ENCODE measurements at regions of chr4 and their contacts with region 1.

Region 1: GRCh38 chr4:1082215-1083182 is 30.9 kb downstream of the RNF212 start:
- DNase-seq: peak; percentile 76 to 91
- H3K4me3 ChIP-seq: peak overlapping the region in 1 of 2 donors; percentile 27
- H3K27ac ChIP-seq: no peak overlapping the region
- H3K4me1 ChIP-seq: peaks cover 7 to 8% of the 10 kb centered on the region in 2 donors
- H3K27me3 ChIP-seq: no peaks in the 10 kb centered on the region
- CTCF ChIP-seq: no peak

Region 2: DNA sequence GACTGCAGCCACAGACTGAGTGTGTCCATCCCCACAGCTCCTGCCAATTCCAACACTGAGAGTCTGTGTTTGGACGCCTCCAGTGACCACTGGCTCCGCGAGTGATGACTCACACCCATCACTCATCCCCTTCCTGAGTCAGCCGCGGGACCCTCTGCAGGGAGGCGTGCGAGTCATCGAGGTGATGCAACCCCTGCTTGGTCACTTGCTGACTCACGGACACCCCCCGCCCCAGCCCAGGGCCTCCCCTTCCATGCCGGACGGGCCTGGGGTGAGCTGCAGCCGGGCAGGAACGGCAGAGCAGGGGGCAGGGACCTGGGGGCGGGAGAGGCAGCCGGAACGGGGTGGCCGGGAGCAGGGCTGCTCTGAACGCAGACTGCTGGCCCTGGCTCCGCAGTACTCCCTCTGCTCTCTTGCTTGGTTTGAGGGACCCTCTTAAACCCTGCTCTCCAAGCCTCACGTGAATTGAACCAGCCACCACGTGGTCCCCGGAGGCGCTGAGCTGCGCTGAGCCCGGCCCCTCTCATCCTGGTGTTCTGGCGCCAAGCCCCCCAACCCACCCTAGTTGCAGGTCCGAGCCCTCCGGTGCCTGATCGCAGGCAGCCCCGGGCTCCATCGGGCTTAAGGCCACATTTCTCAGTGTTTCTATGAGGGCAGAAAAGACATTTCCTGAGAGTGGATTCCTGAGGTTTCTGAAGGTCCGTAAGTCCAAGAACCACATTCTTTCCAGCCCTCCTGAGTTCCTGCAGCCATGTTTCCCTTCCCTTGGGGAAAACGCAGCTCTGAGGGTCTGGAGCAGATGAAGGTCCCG is 38.6 kb before region 1 on chr4:
- intact Hi-C with region 1: loop called (anchors 5 kb)
- DNase-seq: peak; percentile 94 to 99
- H3K4me3 ChIP-seq: peak overlapping the region; percentile 35 to 56
- H3K27ac ChIP-seq: peak overlapping the region; percentile 80 to 95
- H3K4me1 ChIP-seq: peaks cover 38 to 73% of the 10 kb centered on the region in 2 donors
- H3K27me3 ChIP-seq: no peaks in the 10 kb centered on the region
- CTCF ChIP-seq: no peak

Region 3: DNA sequence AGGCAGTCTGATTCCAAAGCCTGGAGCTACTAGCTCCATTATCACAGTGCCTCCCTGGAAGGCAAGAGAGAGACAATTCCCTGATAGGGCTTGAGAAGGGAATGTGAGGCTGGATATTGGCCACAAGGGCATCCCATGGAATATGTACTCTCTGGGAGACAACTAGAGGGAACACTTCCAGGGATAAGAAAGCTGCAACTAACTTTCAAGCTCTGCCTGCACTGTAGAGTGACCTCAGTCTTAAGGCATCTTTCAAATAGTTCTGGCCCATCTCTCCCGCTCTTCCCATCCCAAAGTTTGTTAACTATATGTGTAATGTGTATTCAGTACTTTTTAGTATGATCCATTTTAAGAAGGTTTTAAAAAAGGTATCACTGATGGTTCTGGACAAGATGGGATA is 44.0 kb after region 1 on chr4:
- intact Hi-C with region 1: no loop called
- DNase-seq: no peak
- H3K4me3 ChIP-seq: no peak overlapping the region
- H3K27ac ChIP-seq: no peak overlapping the region
- H3K4me1 ChIP-seq: no peaks in the 10 kb centered on the region
- H3K27me3 ChIP-seq: peaks cover 4% of the 10 kb centered on the region
- CTCF ChIP-seq: no peak

Region 4: GRCh38 chr4:1167247-1167949 is 84.9 kb after region 1 on chr4:
- intact Hi-C with region 1: no loop called
- DNase-seq: peak in 1 of 2 donors; percentile 89
- H3K4me3 ChIP-seq: peak overlapping the region; percentile 72 to 91
- H3K27ac ChIP-seq: no peak overlapping the region
- H3K4me1 ChIP-seq: peaks cover 8 to 22% of the 10 kb centered on the region in 2 donors
- H3K27me3 ChIP-seq: peaks cover 20% of the 10 kb centered on the region
- CTCF ChIP-seq: peak; percentile 76 to 89 (median 85)